Heart left ventricle (tissue), 16 donors: ENCODE measurements at regions of chr19 and their contacts with region 1.

Region 1: GRCh38 chr19:39254531-39255345 is 6.1 kb upstream of the IFNL4 start:
- DNase-seq: no peak
- ATAC-seq: no peak
- H3K4me3 ChIP-seq: no peak overlapping the region
- H3K27ac ChIP-seq: no peak overlapping the region
- H3K4me1 ChIP-seq: no peaks in the 10 kb centered on the region
- H3K27me3 ChIP-seq: peaks cover 5 to 79% (median 20%) of the 10 kb centered on the region in 9 donors
- CTCF ChIP-seq: no peak
- POLR2A ChIP-seq: no peak

Region 2: DNA sequence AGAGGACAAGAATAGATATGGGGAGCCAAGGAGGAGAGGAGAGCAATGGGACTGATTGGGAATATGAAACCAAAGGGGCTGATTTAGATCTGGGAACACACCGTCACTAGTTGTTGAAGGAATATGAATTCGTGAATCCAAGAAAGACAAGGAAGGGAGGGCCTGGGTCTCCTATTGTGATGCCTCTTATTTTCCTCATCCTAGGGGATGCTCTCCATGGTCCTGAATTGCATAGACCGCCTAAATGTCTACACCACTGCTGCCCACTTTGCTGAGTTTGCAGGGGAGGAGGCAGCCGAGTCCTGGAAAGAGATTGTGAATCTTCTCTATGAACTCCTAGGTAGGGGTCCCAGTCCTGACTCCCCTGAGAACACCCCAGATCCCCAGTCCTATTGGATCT is 799.7 kb before region 1 on chr19:
- intact Hi-C with region 1: loop called in 1 of 10 experiments (anchors 5 kb)
- DNase-seq: no peak
- ATAC-seq: no peak
- H3K4me3 ChIP-seq: no peak overlapping the region
- H3K27ac ChIP-seq: no peak overlapping the region
- H3K4me1 ChIP-seq: no peaks in the 10 kb centered on the region
- H3K27me3 ChIP-seq: peaks cover 0 to 3% (median 0%) of the 10 kb centered on the region in 9 donors
- CTCF ChIP-seq: no peak
- POLR2A ChIP-seq: no peak